AG04449 (cell line): ENCODE measurements at regions of chr5 and their contacts with region 1.

Region 1: GRCh38 chr5:170791325-170791954 is 7.9 kb downstream of the GABRP start:
- DNase-seq: no peak
- H3K4me3 ChIP-seq: no peak overlapping the region
- CTCF ChIP-seq: peak; percentile 48

Region 2: GRCh38 chr5:170638454-170639220 is 152.8 kb before region 1 on chr5:
- CTCF ChIA-PET with region 1: interaction called, 56 read pairs
- POLR2A ChIA-PET with region 1: no interaction called
- DNase-seq: no peak
- H3K4me3 ChIP-seq: no peak overlapping the region
- CTCF ChIP-seq: peak; percentile 84

Region 3: DNA sequence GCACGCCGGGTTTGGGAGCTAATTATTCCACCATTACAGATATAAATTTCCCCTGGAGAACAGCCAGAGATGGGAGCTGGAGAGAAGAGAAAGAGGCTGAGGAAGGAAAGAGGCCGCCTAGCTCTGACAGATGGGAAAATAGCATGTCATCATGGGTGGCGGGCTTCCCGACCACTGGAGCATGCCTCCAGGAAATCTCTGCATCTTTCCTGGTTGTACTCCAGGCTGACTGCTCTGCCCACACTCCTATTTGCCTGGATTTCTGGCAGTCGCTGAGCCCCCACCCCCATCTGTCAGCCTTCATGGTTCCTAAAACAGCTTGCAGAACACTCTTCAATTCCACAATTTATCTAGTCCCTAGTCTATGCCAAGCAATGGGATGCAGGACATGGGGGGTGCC is 22.2 kb before region 1 on chr5:
- CTCF ChIA-PET with region 1: interaction called, 10 read pairs
- POLR2A ChIA-PET with region 1: interaction called, 3 read pairs
- DNase-seq: no peak
- H3K4me3 ChIP-seq: no peak overlapping the region
- CTCF ChIP-seq: no peak

Region 4: GRCh38 chr5:170774836-170775235 is 16.6 kb before region 1 on chr5:
- CTCF ChIA-PET with region 1: interaction called, 19 read pairs
- POLR2A ChIA-PET with region 1: interaction called, 3 read pairs
- DNase-seq: no peak
- H3K4me3 ChIP-seq: no peak overlapping the region
- CTCF ChIP-seq: no peak

Region 5: GRCh38 chr5:170937914-170938313 is 146.5 kb after region 1 on chr5:
- CTCF ChIA-PET with region 1: no interaction called
- POLR2A ChIA-PET with region 1: no interaction called
- DNase-seq: no peak
- H3K4me3 ChIP-seq: no peak overlapping the region
- CTCF ChIP-seq: no peak